GM10248 (cell line): ENCODE measurements at regions of chr5 and their contacts with region 1.

Region 1: GRCh38 chr5:80076112-80077050 is 41.2 kb downstream of the THBS4 start:
- DNase-seq: no peak
- CTCF ChIP-seq: no peak

Region 2: GRCh38 chr5:79878721-79879336 is 197.6 kb before region 1 on chr5:
- CTCF ChIA-PET with region 1: interaction called, 10 read pairs
- POLR2A ChIA-PET with region 1: no interaction called
- DNase-seq: peak; percentile 36
- CTCF ChIP-seq: peak; percentile 38

Region 3: DNA sequence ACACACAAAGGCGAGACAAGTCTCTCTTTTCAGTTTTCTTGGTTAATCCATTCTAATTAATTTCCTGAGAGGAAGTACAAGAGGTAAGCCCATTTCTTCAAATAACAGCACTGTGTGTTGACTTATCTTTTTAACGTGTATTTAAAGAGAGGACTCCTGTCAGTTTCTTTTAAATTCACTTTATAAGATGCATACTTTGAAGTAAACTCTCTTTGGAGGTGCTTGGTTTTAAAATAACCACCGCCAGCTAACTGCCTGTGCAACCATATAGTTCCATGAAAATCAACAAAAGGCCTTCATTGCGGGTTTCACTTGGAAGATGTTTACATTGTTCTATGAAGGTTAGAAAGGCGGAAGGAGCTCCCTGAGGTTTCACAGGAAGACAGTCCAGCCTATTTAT is 192.5 kb after region 1 on chr5:
- CTCF ChIA-PET with region 1: no interaction called
- POLR2A ChIA-PET with region 1: no interaction called
- DNase-seq: no peak
- CTCF ChIP-seq: no peak